GM12878 (cell line): ENCODE measurements at regions of chr9 and their contacts with region 1.

Region 1: DNA sequence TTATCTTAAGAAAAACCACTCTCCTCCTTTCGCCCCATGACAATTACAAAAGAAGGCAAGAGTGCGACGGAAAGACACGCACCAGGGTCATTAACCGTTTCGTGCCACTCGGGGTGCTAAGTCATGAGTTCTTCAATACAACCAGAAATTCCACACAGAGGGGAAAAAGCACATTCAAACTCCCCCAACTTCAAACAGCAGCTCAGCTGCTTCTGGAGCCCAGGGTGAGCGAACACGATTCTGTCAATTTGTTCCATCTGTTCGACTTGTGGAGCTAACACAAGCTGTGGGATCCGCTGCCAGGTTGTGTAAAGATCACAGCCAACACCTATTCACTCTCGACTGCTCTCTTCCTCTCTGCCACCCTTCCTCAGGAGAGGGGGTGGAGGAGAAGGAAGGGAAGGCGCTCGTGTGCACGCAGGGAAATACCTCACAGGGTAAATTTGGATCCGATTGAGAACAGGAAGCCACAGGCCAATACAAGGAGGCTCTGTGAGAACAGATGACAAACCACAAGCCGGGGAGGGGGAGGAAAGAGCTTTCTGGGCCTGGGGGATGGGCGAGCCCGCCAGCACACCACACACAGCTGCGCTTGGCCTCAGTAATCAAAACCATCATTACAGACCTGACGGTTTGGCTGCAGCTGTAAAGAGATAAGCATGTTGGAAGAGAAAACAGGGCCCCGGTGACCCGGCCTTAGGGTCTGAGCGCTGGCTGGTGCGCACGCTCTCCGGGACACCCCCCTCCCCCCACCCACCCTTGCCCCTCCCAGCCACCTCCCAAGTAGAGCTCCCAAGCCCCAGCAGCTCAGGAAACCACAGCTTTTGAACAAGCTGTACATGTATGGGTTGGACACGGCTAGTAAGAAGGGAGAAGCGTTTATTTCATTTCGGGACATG is 54.3 kb downstream of the PTCH1 start:
- DNase-seq: peak; percentile 94
- ATAC-seq: peak; percentile 98
- H3K4me3 ChIP-seq: peak overlapping the region; percentile 68
- H3K27ac ChIP-seq: peak overlapping the region; percentile 73
- H3K4me1 ChIP-seq: peaks cover 31% of the 10 kb centered on the region
- H3K27me3 ChIP-seq: no peaks in the 10 kb centered on the region
- CTCF ChIP-seq: no peak
- EP300 ChIP-seq: peak; percentile 89 to 97
- POLR2A ChIP-seq: peak; percentile 72
- RAD21 ChIP-seq: peak; percentile 17; the same call in 1 of the 2 replicates

Region 2: DNA sequence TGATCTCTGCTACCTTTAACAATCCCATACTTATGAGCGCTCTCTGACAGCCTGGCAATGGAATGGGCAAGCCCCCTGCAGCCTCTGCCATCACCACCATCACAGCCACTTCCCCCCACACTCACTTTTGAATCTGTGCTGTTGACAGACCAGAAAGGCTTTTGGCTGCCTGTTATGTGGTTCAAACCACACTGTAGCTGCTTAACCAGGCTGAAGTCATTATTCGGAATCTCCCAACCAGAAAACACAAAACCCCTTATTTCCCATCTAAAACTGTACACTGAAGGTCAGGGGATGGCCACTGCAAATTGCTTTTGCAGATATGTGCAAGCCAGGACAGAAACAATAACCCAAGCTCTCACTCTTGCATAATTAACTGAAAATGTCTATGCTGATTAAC is 18.5 kb after region 1 on chr9:
- CTCF ChIA-PET with region 1: no interaction called
- POLR2A ChIA-PET with region 1: interaction called, 4 read pairs
- RAD21 ChIA-PET with region 1: interaction called, 12 read pairs
- SMC1A ChIA-PET with region 1: interaction called, 9 read pairs
- in situ Hi-C with region 1: no loop called
- intact Hi-C with region 1: no loop called
- DNase-seq: peak; percentile 33
- ATAC-seq: peak; percentile 90
- H3K4me3 ChIP-seq: no peak overlapping the region
- H3K27ac ChIP-seq: no peak overlapping the region
- H3K4me1 ChIP-seq: no peaks in the 10 kb centered on the region; the same call in 1 of the 2 replicates
- H3K27me3 ChIP-seq: no peaks in the 10 kb centered on the region
- CTCF ChIP-seq: no peak
- EP300 ChIP-seq: peak; percentile 44 to 68; a peak in 2 of 4 replicates
- POLR2A ChIP-seq: no peak
- RAD21 ChIP-seq: no peak

Region 3: GRCh38 chr9:95494416-95495371 is 32.2 kb after region 1 on chr9:
- CTCF ChIA-PET with region 1: no interaction called
- POLR2A ChIA-PET with region 1: interaction called, 7 read pairs
- RAD21 ChIA-PET with region 1: interaction called, 12 read pairs
- SMC1A ChIA-PET with region 1: interaction called, 9 read pairs
- in situ Hi-C with region 1: no loop called
- intact Hi-C with region 1: no loop called
- DNase-seq: peak; percentile 88
- ATAC-seq: peak; percentile 99
- H3K4me3 ChIP-seq: peak overlapping the region; percentile 59
- H3K27ac ChIP-seq: peak overlapping the region; percentile 65
- H3K4me1 ChIP-seq: peaks cover 20% of the 10 kb centered on the region
- H3K27me3 ChIP-seq: no peaks in the 10 kb centered on the region
- CTCF ChIP-seq: no peak
- EP300 ChIP-seq: peak in 1 of 2 experiments; percentile 20; a peak in 1 of 4 replicates
- POLR2A ChIP-seq: peak; percentile 51
- RAD21 ChIP-seq: no peak

Region 4: GRCh38 chr9:95505717-95506427 is 43.4 kb after region 1 on chr9:
- CTCF ChIA-PET with region 1: interaction called, 3 read pairs
- POLR2A ChIA-PET with region 1: interaction called, 9 read pairs
- RAD21 ChIA-PET with region 1: interaction called, 14 read pairs
- SMC1A ChIA-PET with region 1: interaction called, 12 read pairs
- in situ Hi-C with region 1: no loop called
- intact Hi-C with region 1: loop called (anchors 1 kb)
- DNase-seq: no peak
- ATAC-seq: peak; percentile 12
- H3K4me3 ChIP-seq: peak overlapping the region; percentile 94
- H3K27ac ChIP-seq: peak overlapping the region; percentile 90
- H3K4me1 ChIP-seq: peaks cover 20% of the 10 kb centered on the region
- H3K27me3 ChIP-seq: no peaks in the 10 kb centered on the region; a peak in 1 of 4 replicates
- CTCF ChIP-seq: no peak
- EP300 ChIP-seq: no peak
- POLR2A ChIP-seq: peak; percentile 65; the same call in 1 of the 2 replicates
- RAD21 ChIP-seq: no peak